ENCODE measurements at regions of chr16 and their contacts with region 1.

Region 1: DNA sequence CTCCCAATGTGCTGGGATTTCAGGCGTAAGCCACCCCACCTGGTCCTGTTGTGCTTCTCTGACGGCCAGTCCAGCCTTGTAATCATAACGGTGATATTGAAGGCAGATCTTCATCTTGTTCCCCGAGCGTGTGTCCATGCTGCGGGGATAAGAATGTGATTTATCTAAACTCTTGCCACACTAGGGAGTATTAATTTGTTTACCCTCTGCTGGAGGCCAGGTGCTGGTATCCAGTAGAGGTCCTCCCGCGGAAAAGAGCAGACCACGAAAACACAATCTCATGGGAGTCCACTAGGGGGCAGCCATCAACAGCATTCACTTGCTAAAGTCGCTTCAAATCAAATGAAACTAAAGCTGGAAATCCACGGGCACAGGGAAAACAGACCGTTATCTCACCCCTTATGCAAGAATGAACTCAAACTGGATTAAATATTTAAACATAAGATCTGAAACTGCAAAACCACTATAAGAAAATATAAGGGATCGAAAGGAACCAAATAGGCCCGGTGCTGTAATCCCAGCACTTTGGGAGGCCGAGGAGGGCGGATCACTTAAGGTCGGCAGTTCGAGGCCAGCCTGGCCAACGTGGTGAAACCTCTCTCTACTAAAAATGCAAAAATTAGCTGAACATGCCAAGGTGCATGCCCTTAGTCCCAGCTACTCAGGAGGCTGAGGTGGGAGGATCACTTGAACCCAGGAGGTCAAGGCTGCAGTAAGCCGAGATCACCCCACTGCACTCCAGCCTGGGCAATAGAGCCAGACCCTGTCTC is 22.3 kb upstream of the RBBP6 start:
- H3K4me3 ChIP-seq: no peak overlapping the region
- H3K27ac ChIP-seq: no peak overlapping the region
- H3K4me1 ChIP-seq: no peaks in the 10 kb centered on the region
- CTCF ChIP-seq: peak; percentile 83

Region 2: DNA sequence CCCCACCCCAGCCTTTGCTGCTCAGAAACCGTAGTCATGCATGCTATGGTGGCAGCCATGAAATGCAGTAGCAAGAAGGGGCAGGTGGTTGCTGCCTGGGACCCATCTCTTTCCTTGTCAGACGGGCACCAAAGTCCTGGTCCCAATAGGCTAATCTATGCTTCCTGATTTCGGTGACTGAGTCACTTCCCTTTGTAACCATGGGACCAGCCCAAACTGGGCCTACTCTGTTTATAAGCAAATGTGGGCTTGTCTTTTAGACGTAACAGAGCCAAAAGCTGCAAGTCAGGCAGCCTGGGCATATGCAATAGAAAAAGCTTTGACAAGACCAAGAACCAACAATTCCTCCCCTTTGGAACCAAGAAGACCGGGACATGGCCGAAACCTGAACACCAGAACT is 76.8 kb before region 1 on chr16:
- CTCF ChIA-PET with region 1: no interaction called
- POLR2A ChIA-PET with region 1: no interaction called
- H3K4me3 ChIP-seq: no peak overlapping the region
- H3K27ac ChIP-seq: no peak overlapping the region
- H3K4me1 ChIP-seq: no peaks in the 10 kb centered on the region
- CTCF ChIP-seq: no peak

Region 3: GRCh38 chr16:24700549-24701392 is 183.7 kb after region 1 on chr16:
- CTCF ChIA-PET with region 1: no interaction called
- POLR2A ChIA-PET with region 1: no interaction called
- H3K4me3 ChIP-seq: no peak overlapping the region
- H3K27ac ChIP-seq: no peak overlapping the region
- H3K4me1 ChIP-seq: no peaks in the 10 kb centered on the region
- CTCF ChIP-seq: no peak

Region 4: DNA sequence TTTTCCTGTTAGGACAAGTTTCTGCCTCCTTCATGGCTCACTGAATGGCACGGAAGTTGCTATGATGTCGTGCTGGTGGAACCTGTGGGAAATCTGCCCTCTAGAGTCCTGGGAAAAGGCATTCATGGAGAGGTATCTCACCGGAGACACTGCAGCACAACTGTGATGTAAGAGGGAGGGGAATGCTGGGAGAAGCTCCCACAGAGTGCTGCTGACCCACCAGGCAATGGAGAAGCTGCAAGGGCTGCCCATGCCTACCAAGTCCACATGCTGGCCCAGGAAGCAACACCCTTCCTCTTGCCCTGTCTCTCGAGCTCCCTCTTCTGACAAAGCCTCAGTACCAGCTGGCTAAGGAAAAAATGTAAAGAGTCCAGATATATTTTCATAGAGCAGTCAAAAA is 283.5 kb after region 1 on chr16:
- CTCF ChIA-PET with region 1: interaction called, 11 read pairs
- POLR2A ChIA-PET with region 1: no interaction called
- H3K4me3 ChIP-seq: no peak overlapping the region
- H3K27ac ChIP-seq: no peak overlapping the region
- H3K4me1 ChIP-seq: no peaks in the 10 kb centered on the region
- CTCF ChIP-seq: peak; percentile 61